Activated CD8-positive, alpha-beta memory T cell treated with anti-CD3 and anti-CD28 coated beads, Interleukin-2, amount 10 ng/mL, durations not matched to agents 7 days and 5 days (primary cell): ENCODE measurements at regions of chr1 and their contacts with region 1.

Region 1: DNA sequence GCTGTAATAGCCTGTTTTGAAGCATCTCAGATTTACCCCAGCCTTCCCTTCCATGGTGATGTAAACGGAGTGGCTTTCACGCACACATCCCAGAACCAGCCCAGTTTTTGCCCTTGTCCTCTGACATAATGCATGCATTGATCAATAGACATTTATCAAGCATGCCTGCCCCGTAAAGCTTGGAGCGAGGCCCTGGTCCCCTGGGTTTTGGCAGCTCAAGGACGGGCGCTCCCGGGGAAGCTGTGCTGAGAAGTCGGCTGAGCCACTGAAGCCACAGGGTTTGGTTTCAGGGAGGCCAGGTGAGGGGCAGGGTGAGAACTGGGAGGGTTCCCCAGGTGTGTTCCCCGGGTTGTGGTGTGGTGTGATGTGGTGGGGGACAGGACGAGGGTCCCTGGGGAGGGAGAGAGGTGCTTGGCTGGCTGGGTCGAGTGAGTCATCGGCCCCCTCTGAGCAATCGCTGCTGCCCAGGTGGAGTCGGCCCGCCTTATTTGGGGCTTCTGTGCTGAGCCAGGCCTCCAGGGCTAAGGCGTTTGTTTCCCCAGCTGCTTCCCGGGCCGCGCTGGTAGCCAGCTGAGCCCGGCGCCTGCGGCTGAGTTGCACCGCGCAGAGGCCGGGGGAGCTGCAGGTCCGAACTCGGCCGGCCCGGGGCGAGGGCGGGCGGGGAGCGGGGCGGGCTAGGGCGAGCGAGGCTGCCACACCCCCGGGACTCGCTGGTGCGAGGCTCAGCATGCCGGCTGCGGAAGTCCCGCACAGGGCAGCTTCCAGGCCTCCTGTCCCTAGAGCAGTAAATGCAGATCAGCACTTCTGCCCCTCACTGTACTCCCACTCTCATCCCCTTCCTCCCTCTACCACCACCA is 23.6 kb downstream of the ATP2B4 start:
- DNase-seq: peak; percentile 80
- ATAC-seq: peak; percentile 62
- H3K4me3 Mint-ChIP-seq: peak overlapping the region; percentile 71
- H3K27ac Mint-ChIP-seq: peak overlapping the region; percentile 87
- H3K4me1 Mint-ChIP-seq: peaks cover 83% of the 10 kb centered on the region
- H3K27me3 Mint-ChIP-seq: no peaks in the 10 kb centered on the region

Region 2: GRCh38 chr1:203558064-203558760 is 92.0 kb before region 1 on chr1:
- CTCF ChIA-PET with region 1: no interaction called
- DNase-seq: no peak
- ATAC-seq: no peak
- H3K4me3 Mint-ChIP-seq: no peak overlapping the region
- H3K27ac Mint-ChIP-seq: no peak overlapping the region
- H3K4me1 Mint-ChIP-seq: peaks cover 3% of the 10 kb centered on the region
- H3K27me3 Mint-ChIP-seq: peaks cover 24% of the 10 kb centered on the region

Region 3: GRCh38 chr1:203663294-203663693 is 13.1 kb after region 1 on chr1:
- CTCF ChIA-PET with region 1: interaction called, 10 read pairs
- DNase-seq: peak; percentile 60
- ATAC-seq: peak; percentile 57
- H3K4me3 Mint-ChIP-seq: no peak overlapping the region
- H3K27ac Mint-ChIP-seq: peak overlapping the region; percentile 63
- H3K4me1 Mint-ChIP-seq: peaks cover 70% of the 10 kb centered on the region
- H3K27me3 Mint-ChIP-seq: no peaks in the 10 kb centered on the region

Region 4: GRCh38 chr1:203673550-203674427 is 23.6 kb after region 1 on chr1:
- CTCF ChIA-PET with region 1: interaction called, 38 read pairs
- DNase-seq: peak; percentile 94
- ATAC-seq: peak; percentile 91
- H3K4me3 Mint-ChIP-seq: peak overlapping the region; percentile 69
- H3K27ac Mint-ChIP-seq: peak overlapping the region; percentile 98
- H3K4me1 Mint-ChIP-seq: peaks cover 77% of the 10 kb centered on the region
- H3K27me3 Mint-ChIP-seq: no peaks in the 10 kb centered on the region